Naive thymus-derived CD4-positive, alpha-beta T cell (primary cell): ENCODE measurements at regions of chr1 and their contacts with region 1.

Region 1: GRCh38 chr1:39973503-39974135 is 18.7 kb downstream of the MFSD2A start:
- DNase-seq: peak; percentile 49 to 73 (median 63)
- ATAC-seq: peak; percentile 85
- H3K4me3 ChIP-seq: no peak overlapping the region
- H3K4me3 Mint-ChIP-seq: peak overlapping the region in 1 of 10 donors; percentile 9
- H3K27ac ChIP-seq: no peak overlapping the region
- H3K27ac Mint-ChIP-seq: no peak overlapping the region
- H3K4me1 ChIP-seq: no peaks in the 10 kb centered on the region
- H3K4me1 Mint-ChIP-seq: peaks cover 4 to 6% (median 5%) of the 10 kb centered on the region in 7 donors
- H3K27me3 ChIP-seq: no peaks in the 10 kb centered on the region
- H3K27me3 Mint-ChIP-seq: peaks cover 0 to 3% (median 0%) of the 10 kb centered on the region in 5 donors

Region 2: GRCh38 chr1:39816415-39817090 is 157.1 kb before region 1 on chr1:
- CTCF ChIA-PET with region 1: interaction called, 6 read pairs
- POLR2A ChIA-PET with region 1: interaction called, 6 read pairs
- intact Hi-C with region 1: loop called (anchors 1 kb)
- DNase-seq: peak; percentile 16 to 73 (median 41)
- ATAC-seq: peak; percentile 84
- H3K4me3 ChIP-seq: peak overlapping the region; percentile 31
- H3K4me3 Mint-ChIP-seq: peak overlapping the region; percentile 35 to 94 (median 85)
- H3K27ac ChIP-seq: no peak overlapping the region
- H3K27ac Mint-ChIP-seq: peak overlapping the region in 4 of 9 donors; percentile 43 to 85 (median 70)
- H3K4me1 ChIP-seq: no peaks in the 10 kb centered on the region
- H3K4me1 Mint-ChIP-seq: peaks cover 6 to 15% (median 8%) of the 10 kb centered on the region in 7 donors
- H3K27me3 ChIP-seq: peaks cover 0 to 2% of the 10 kb centered on the region in 2 donors
- H3K27me3 Mint-ChIP-seq: peaks cover 0 to 28% (median 4%) of the 10 kb centered on the region in 5 donors

Region 3: GRCh38 chr1:39919545-39919944 is 54.1 kb before region 1 on chr1:
- CTCF ChIA-PET with region 1: interaction called, 61 read pairs
- POLR2A ChIA-PET with region 1: interaction called, 3 read pairs
- intact Hi-C with region 1: loop called (anchors 1 kb)
- DNase-seq: peak in 8 of 9 donors; percentile 48 to 76 (median 67)
- ATAC-seq: peak; percentile 93
- H3K4me3 ChIP-seq: no peak overlapping the region
- H3K4me3 Mint-ChIP-seq: no peak overlapping the region
- H3K27ac ChIP-seq: no peak overlapping the region
- H3K27ac Mint-ChIP-seq: no peak overlapping the region
- H3K4me1 ChIP-seq: no peaks in the 10 kb centered on the region
- H3K4me1 Mint-ChIP-seq: peaks cover 0 to 4% (median 0%) of the 10 kb centered on the region in 7 donors
- H3K27me3 ChIP-seq: no peaks in the 10 kb centered on the region
- H3K27me3 Mint-ChIP-seq: peaks cover 0 to 8% (median 4%) of the 10 kb centered on the region in 5 donors

Region 4: DNA sequence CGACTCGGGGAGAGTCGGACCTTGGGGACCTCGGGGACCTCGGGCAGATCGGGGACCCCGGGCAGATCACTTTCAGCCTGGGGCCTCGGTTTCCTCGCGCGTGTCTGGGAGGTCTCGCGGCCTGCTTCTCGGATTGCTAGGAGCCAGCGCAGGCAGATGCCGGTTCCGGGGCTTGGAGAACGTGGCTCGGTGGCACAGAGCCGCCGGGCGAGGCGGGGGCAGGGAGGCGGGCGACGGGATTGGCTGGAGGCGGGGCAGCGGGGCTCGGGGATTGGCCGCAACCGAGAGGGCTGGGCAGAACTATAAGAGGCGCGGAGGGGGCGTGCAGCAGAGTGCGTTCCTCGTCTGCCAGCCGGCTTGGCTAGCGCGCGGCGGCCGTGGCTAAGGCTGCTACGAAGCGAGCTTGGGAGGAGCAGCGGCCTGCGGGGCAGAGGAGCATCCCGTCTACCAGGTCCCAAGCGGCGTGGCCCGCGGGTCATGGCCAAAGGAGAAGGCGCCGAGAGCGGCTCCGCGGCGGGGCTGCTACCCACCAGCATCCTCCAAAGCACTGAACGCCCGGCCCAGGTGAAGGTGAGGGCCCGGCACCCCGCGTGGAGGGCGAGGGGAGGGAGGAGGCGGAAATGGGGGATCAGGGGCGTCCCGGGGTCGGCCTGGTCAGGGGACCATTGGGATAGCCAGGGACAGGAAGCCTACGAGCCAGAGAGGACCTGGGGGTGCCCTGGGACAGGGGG is 18.6 kb before region 1 on chr1 and contains the start of gene MFSD2A:
- CTCF ChIA-PET with region 1: interaction called, 9 read pairs
- POLR2A ChIA-PET with region 1: no interaction called
- intact Hi-C with region 1: loop called in 1 of 2 experiments (anchors 1 kb)
- DNase-seq: peak; percentile 80 to 92 (median 86)
- ATAC-seq: peak; percentile 98
- H3K4me3 ChIP-seq: peak within 1 kb of the TSS; percentile 84
- H3K4me3 Mint-ChIP-seq: peak within 1 kb of the TSS; percentile 89 to 97 (median 94)
- H3K27ac ChIP-seq: peak within 1 kb of the TSS; percentile 28
- H3K27ac Mint-ChIP-seq: peak within 1 kb of the TSS in 8 of 9 donors; percentile 51 to 95 (median 78)
- H3K4me1 ChIP-seq: peaks cover 7 to 18% of the 10 kb centered on the region in 2 donors
- H3K4me1 Mint-ChIP-seq: peaks cover 16 to 25% (median 20%) of the 10 kb centered on the region in 7 donors
- H3K27me3 ChIP-seq: no peaks in the 10 kb centered on the region
- H3K27me3 Mint-ChIP-seq: peaks cover 0 to 7% (median 0%) of the 10 kb centered on the region in 5 donors
- total RNA-seq, gene MFSD2A: 0.70 to 8.7 (median 4.4) TPM

Region 5: GRCh38 chr1:40020447-40021085 is 46.9 kb after region 1 on chr1:
- CTCF ChIA-PET with region 1: no interaction called
- POLR2A ChIA-PET with region 1: no interaction called
- intact Hi-C with region 1: no loop called
- DNase-seq: no peak
- ATAC-seq: no peak
- H3K4me3 ChIP-seq: no peak overlapping the region
- H3K4me3 Mint-ChIP-seq: no peak overlapping the region
- H3K27ac ChIP-seq: no peak overlapping the region
- H3K27ac Mint-ChIP-seq: no peak overlapping the region
- H3K4me1 ChIP-seq: no peaks in the 10 kb centered on the region
- H3K4me1 Mint-ChIP-seq: no peaks in the 10 kb centered on the region
- H3K27me3 ChIP-seq: no peaks in the 10 kb centered on the region
- H3K27me3 Mint-ChIP-seq: peaks cover 0 to 31% (median 0%) of the 10 kb centered on the region in 5 donors